Gastrocnemius medialis (tissue), 4 donors: ENCODE measurements at regions of chr11 and their contacts with region 1.

Region 1: GRCh38 chr11:66592457-66593302 is at the starts of genes CCDC87 and CCS:
- DNase-seq: peak; percentile 96 to 97
- ATAC-seq: peak; percentile 97 to 98
- H3K4me3 ChIP-seq: peak within 1 kb of the TSS; percentile 63 to 98 (median 82)
- H3K27ac ChIP-seq: peak within 1 kb of the TSS; percentile 82 to 91 (median 88)
- H3K4me1 ChIP-seq: peaks cover 12 to 21% of the 10 kb centered on the region in 2 donors
- H3K27me3 ChIP-seq: no peaks in the 10 kb centered on the region
- CTCF ChIP-seq: peak; percentile 79 to 94 (median 86)
- POLR2A ChIP-seq: peak; percentile 88
- total RNA-seq, gene CCDC87: 0.13 to 0.41 TPM in 2 of 4 donors, not detected in the others
- total RNA-seq, gene CCS: 9.0 to 12.3 (median 11.7) TPM

Region 2: GRCh38 chr11:66523462-66524010 is 69.1 kb before region 1 on chr11:
- in situ Hi-C with region 1: no loop called
- intact Hi-C with region 1: no loop called
- DNase-seq: no peak
- ATAC-seq: no peak
- H3K4me3 ChIP-seq: no peak overlapping the region
- H3K27ac ChIP-seq: peak overlapping the region in 3 of 4 donors; percentile 69 to 82 (median 75)
- H3K4me1 ChIP-seq: peaks cover 0 to 12% of the 10 kb centered on the region in 2 donors
- H3K27me3 ChIP-seq: no peaks in the 10 kb centered on the region
- CTCF ChIP-seq: no peak
- POLR2A ChIP-seq: no peak

Region 3: DNA sequence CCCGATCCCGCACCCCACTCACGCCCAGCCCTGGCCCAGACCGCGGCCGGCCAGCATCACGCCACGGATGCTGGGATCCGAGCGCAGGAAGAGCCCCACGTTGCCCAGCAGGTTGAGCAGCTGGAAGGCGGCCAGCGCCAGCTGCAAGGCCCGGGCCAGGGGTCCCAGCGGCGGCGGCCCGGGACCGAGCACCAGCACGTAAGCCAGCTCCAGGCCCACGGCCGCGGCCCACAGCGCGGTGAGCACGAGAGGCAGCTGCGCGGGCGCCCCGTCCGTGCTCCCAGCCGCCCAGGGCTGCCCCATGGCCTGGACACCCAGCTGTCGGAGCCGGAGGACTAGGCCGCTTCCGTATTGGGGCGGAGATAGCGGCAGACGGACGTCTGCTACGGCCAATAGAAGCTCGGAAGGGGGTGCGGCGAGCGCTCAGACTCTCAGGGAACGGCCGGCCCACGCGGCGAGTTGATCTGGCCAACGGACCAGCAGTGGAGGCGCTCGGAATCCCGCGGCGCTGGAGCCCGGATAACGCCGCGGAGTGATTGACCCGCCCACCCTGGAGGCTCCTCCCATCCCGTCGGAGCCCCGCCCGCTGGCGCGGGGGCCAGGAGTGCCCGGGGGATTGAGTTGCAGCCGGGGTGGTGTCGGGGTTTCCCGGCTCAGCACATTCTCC is 46.8 kb before region 1 on chr11 and contains the start of gene ZDHHC24:
- in situ Hi-C with region 1: no loop called
- intact Hi-C with region 1: loop called (anchors 2 kb)
- DNase-seq: peak; percentile 96 to 97
- ATAC-seq: peak; percentile 86 to 92
- H3K4me3 ChIP-seq: peak within 1 kb of the TSS; percentile 70 to 99 (median 80)
- H3K27ac ChIP-seq: peak within 1 kb of the TSS; percentile 79 to 94 (median 91)
- H3K4me1 ChIP-seq: peaks cover 25 to 50% of the 10 kb centered on the region in 2 donors
- H3K27me3 ChIP-seq: no peaks in the 10 kb centered on the region
- CTCF ChIP-seq: no peak
- POLR2A ChIP-seq: peak; percentile 49 to 75
- total RNA-seq, gene ZDHHC24: 7.2 to 13.0 (median 11.2) TPM

Region 4: DNA sequence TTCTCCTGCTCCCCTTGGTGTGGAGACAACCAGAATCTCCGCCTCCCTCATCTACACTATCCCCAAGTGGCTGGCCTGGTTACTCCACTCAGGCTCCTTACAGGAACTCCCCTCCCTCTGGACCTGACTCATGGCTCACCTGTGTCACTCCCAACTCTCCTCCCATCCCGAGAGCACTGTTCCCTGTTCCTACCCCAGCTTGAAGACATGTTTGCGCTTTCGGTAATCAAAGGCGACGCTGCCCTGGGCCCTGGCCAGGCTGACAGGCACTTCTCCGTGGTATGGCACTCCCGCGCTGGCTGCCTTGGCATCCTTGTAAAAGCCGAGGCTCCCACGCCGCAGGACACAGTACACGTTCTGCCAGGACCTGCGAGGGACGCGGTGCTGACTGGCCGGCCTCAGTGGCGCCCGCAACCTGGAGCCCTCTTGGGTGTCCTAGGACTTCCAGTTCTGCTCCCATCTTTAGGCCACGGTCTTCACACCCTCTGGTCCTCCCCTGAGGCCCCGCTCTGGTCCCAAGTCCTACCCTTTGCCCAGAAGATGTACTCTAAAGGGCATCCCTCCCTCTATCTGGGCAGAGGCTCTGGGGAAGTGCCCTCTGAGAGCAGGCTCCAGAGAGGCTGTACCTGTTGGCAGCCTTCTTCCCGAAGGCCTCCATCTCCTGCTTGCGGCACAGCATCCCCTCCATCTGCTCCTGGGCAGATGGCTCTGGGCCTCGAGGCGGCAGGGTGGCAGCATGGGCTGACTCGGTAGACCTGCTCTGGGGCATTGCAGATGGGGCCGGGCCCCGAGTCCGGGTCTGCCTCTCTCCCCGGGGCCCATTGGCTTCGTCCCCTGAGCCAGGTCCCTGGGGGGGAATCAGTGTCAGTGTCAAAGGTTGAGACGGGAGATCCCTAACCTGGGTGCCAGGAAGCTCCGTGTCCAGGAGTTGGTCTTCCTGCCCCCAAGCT is 94.4 kb after region 1 on chr11:
- in situ Hi-C with region 1: no loop called
- intact Hi-C with region 1: no loop called
- DNase-seq: no peak
- ATAC-seq: no peak
- H3K4me3 ChIP-seq: no peak overlapping the region
- H3K27ac ChIP-seq: no peak overlapping the region
- H3K4me1 ChIP-seq: no peaks in the 10 kb centered on the region
- H3K27me3 ChIP-seq: no peaks in the 10 kb centered on the region
- CTCF ChIP-seq: no peak
- POLR2A ChIP-seq: no peak

Region 5: GRCh38 chr11:66835768-66836405 is 243.2 kb after region 1 on chr11:
- in situ Hi-C with region 1: loop called in 2 of 4 experiments (anchors 25 kb)
- intact Hi-C with region 1: loop called (anchors 10 kb)
- DNase-seq: no peak
- ATAC-seq: no peak
- H3K4me3 ChIP-seq: no peak overlapping the region
- H3K27ac ChIP-seq: no peak overlapping the region
- H3K4me1 ChIP-seq: no peaks in the 10 kb centered on the region
- H3K27me3 ChIP-seq: no peaks in the 10 kb centered on the region
- CTCF ChIP-seq: no peak
- POLR2A ChIP-seq: no peak